ENCODE measurements at regions of chr11 and their contacts with region 1.

Region 1: GRCh38 chr11:128029219-128029722 is 558.1 kb downstream of the ETS1 start:
- DNase-seq: no peak
- H3K4me3 ChIP-seq: no peak overlapping the region
- H3K27ac ChIP-seq: no peak overlapping the region
- H3K4me1 ChIP-seq: no peaks in the 10 kb centered on the region
- H3K27me3 ChIP-seq: peaks cover 0 to 1% (median 0%) of the 10 kb centered on the region in 4 experiments; a peak in 1 of 7 replicates
- CTCF ChIP-seq: no peak
- EP300 ChIP-seq: no peak
- POLR2A ChIP-seq: no peak
- RAD21 ChIP-seq: no peak

Region 2: DNA sequence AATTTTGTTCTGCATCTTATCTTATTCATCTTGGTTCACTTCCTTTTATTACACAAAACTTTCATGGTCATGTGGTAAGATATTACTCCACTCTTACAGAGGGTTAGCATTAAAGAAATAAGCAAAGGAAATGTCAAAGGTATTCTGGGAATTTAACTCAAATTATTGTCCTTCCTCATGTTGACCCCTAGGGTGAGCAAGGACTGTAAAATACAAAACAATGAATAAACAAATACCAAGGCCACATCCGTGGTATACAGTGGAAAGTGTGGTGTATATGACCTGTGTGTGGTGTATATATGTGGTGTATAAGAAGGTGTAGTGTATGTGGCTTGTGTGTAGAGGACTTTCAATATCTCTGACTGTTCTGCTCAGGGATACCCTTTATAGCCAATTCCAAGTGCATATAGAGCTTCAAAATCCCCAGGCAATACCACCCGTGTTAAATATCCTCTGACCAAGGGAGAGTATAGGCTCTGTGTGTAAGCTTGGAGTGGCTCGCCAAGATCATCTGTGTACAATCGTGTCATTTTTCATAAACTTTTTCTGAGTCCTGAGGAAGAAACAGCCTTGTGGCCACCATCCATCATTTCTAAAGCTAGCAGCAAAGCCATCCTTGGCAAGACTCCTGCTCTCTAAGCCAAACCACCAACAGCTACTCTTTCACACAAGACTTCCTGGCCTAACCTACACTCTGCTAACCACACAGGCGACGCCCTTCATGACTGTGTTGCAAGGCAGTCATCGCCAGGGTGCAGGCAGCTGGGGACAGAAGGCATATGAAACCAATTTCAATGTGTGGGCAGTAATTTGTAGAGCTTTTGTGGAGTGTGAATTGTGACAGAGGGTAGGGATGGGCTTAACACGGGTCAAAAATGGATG is 10.1 kb after region 1 on chr11:
- CTCF ChIA-PET with region 1: interaction called, 17 read pairs
- POLR2A ChIA-PET with region 1: no interaction called
- DNase-seq: no peak
- H3K4me3 ChIP-seq: no peak overlapping the region
- H3K27ac ChIP-seq: no peak overlapping the region
- H3K4me1 ChIP-seq: no peaks in the 10 kb centered on the region; a peak in 1 of 7 replicates
- H3K27me3 ChIP-seq: no peaks in the 10 kb centered on the region
- CTCF ChIP-seq: no peak
- EP300 ChIP-seq: no peak
- POLR2A ChIP-seq: no peak
- RAD21 ChIP-seq: no peak

Region 3: DNA sequence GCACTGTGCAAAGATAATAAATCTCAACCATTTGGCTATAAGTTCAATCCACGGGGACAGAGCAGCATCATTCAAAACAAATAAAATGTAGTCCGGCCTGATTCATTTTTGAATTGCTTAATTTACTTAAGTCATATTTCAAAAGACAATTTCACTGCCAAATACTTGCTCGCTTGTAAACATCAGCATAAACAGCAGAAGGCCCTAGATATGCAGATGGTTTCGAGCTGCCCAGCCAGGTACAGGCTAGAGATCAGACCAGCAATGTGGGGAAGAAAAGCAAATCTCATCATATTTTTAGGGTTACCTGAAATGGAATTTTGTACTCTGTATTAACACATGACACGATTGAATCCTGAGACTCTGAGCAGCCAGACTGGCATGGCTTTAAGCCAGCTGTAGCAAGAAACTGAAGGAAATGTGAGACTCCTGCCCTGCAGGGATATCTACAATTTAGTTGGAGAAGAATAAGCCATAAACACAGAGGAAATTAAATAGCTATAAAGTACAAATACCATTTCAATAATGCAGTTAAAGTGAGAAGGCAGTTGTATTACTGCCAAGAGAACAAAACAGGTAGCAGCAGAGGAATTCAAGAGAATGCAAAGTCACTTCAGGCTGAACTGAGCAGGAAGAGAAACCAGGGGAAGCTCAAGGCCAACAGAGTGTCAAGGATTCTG is 117.8 kb after region 1 on chr11:
- CTCF ChIA-PET with region 1: interaction called, 11 read pairs
- POLR2A ChIA-PET with region 1: no interaction called
- DNase-seq: no peak
- H3K4me3 ChIP-seq: no peak overlapping the region
- H3K27ac ChIP-seq: no peak overlapping the region
- H3K4me1 ChIP-seq: peaks cover 0 to 2% (median 0%) of the 10 kb centered on the region in 4 experiments; a peak in 2 of 7 replicates
- H3K27me3 ChIP-seq: no peaks in the 10 kb centered on the region
- CTCF ChIP-seq: no peak
- EP300 ChIP-seq: no peak
- POLR2A ChIP-seq: no peak
- RAD21 ChIP-seq: no peak

Measured in H1 (cell line).